ENCODE measurements at regions of chr3 and their contacts with region 1.

Region 1: DNA sequence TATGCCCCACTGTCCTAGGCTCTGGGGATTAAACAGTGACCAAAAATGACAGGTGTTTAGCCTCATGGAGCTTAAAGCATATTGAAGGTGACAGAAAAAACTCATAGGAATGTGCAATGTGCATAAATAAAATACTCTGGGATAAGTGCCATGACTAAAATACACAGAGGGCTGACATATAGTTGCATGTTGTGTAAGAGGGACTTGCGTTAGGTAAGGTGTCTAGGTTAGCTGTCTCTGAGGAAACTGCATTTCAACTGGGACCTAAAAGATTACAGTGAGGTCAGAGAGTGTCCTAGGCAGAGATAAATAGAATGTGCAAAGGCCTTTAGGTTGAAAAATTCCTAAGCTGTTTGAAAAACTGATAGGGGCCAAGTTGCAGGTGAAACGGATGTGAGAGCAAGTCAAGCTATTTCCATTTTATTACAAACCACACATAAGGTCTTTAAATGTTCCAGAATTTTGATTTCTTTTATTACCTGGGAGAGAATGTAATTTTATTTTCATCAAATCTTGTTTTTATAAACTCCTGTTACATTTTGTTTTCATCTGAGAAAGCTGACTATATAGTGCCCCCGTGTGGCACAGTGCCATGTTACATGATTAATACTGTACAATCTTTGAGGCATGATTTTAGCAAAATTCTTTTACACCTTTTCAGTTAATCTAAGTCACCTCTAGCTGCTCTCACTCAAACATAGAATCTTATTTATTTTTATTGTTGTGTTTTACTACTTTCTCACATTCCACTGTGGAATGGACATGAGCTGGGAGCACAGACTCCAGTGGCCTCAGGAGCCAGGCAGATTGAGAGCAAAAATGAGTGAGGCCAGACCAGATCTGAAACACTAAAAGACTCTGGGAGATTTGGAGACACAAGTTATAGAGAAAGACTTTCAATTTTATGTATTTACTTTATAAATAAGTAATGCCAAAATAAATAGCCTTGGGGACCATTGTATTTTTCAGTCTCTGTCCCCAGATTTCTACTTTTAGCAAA is 259.6 kb upstream of the ZNF717 start:
- DNase-seq: no peak
- ATAC-seq: peak; percentile 71
- H3K4me3 ChIP-seq: no peak overlapping the region
- H3K27ac ChIP-seq: no peak overlapping the region
- H3K4me1 ChIP-seq: no peaks in the 10 kb centered on the region
- H3K27me3 ChIP-seq: no peaks in the 10 kb centered on the region
- CTCF ChIP-seq: peak; percentile 37 to 40 (median 40)
- EP300 ChIP-seq: no peak
- POLR2A ChIP-seq: no peak
- RAD21 ChIP-seq: peak; percentile 57

Region 2: DNA sequence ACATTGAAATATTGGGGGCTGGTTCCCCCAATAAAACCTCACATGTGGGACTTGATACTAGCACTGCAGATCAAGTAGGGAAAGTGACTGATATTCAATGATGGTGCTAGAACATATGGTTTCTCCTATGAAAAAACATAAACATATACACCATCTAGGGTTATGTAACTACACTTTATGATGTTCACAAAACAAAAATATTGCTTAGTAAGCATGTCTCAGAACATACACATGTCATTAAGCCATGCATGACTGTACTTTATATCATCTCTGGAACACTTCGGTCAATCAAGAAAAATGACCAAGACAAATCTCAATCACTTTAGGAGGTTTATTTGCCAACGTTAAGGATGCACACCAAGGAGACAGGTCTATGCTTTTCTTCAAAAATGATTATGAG is 316.9 kb before region 1 on chr3:
- CTCF ChIA-PET with region 1: interaction called, 8 read pairs
- POLR2A ChIA-PET with region 1: no interaction called
- RAD21 ChIA-PET with region 1: interaction called, 14 read pairs
- SMC1A ChIA-PET with region 1: interaction called, 6 read pairs
- in situ Hi-C with region 1: no loop called
- intact Hi-C with region 1: loop called (anchors 2 kb)
- DNase-seq: no peak
- ATAC-seq: no peak
- H3K4me3 ChIP-seq: no peak overlapping the region
- H3K27ac ChIP-seq: no peak overlapping the region
- H3K4me1 ChIP-seq: no peaks in the 10 kb centered on the region
- H3K27me3 ChIP-seq: no peaks in the 10 kb centered on the region
- CTCF ChIP-seq: no peak
- EP300 ChIP-seq: no peak
- POLR2A ChIP-seq: no peak
- RAD21 ChIP-seq: no peak

Region 3: GRCh38 chr3:76063019-76063418 is 18.1 kb after region 1 on chr3:
- CTCF ChIA-PET with region 1: interaction called, 12 read pairs
- POLR2A ChIA-PET with region 1: no interaction called
- RAD21 ChIA-PET with region 1: no interaction called
- SMC1A ChIA-PET with region 1: no interaction called
- in situ Hi-C with region 1: no loop called
- intact Hi-C with region 1: no loop called
- DNase-seq: no peak
- ATAC-seq: no peak
- H3K4me3 ChIP-seq: no peak overlapping the region
- H3K27ac ChIP-seq: no peak overlapping the region
- H3K4me1 ChIP-seq: no peaks in the 10 kb centered on the region
- H3K27me3 ChIP-seq: no peaks in the 10 kb centered on the region
- CTCF ChIP-seq: no peak
- EP300 ChIP-seq: no peak
- POLR2A ChIP-seq: no peak
- RAD21 ChIP-seq: no peak

Region 4: DNA sequence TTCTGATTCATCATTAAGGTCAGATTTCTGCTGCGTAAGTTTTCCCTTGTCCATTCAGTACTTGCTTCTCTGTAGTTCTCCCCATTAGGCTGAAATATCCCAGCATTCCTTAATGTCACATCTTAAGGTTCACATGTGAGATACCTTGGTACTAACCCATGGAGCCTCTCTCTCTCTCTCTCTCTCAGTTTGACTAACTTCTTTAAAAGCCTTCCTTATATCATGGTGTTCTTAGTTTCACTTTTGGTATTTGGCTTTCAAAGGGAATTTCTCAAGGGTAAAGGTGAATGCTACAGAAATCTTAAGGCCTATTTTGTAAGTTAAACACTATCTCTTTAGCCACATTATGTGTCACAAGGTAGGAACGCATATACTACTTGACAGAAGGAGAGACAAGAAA is 167.8 kb after region 1 on chr3:
- CTCF ChIA-PET with region 1: no interaction called
- POLR2A ChIA-PET with region 1: no interaction called
- RAD21 ChIA-PET with region 1: no interaction called
- SMC1A ChIA-PET with region 1: no interaction called
- in situ Hi-C with region 1: no loop called
- intact Hi-C with region 1: no loop called
- DNase-seq: no peak
- ATAC-seq: peak; percentile 54
- H3K4me3 ChIP-seq: no peak overlapping the region
- H3K27ac ChIP-seq: no peak overlapping the region
- H3K4me1 ChIP-seq: no peaks in the 10 kb centered on the region
- H3K27me3 ChIP-seq: no peaks in the 10 kb centered on the region
- CTCF ChIP-seq: no peak
- EP300 ChIP-seq: no peak
- POLR2A ChIP-seq: no peak
- RAD21 ChIP-seq: no peak